ENCODE measurements at regions of chr4 and their contacts with region 1.

Region 1: GRCh38 chr4:154779362-154779947 is 1.6 kb upstream of the RBM46 start:
- DNase-seq: no peak
- ATAC-seq: no peak
- H3K4me3 ChIP-seq: no peak overlapping the region
- H3K27ac ChIP-seq: no peak overlapping the region
- H3K4me1 ChIP-seq: no peaks in the 10 kb centered on the region
- H3K27me3 ChIP-seq: no peaks in the 10 kb centered on the region
- CTCF ChIP-seq: peak; percentile 45; the same call in 1 of the 2 replicates

Region 2: DNA sequence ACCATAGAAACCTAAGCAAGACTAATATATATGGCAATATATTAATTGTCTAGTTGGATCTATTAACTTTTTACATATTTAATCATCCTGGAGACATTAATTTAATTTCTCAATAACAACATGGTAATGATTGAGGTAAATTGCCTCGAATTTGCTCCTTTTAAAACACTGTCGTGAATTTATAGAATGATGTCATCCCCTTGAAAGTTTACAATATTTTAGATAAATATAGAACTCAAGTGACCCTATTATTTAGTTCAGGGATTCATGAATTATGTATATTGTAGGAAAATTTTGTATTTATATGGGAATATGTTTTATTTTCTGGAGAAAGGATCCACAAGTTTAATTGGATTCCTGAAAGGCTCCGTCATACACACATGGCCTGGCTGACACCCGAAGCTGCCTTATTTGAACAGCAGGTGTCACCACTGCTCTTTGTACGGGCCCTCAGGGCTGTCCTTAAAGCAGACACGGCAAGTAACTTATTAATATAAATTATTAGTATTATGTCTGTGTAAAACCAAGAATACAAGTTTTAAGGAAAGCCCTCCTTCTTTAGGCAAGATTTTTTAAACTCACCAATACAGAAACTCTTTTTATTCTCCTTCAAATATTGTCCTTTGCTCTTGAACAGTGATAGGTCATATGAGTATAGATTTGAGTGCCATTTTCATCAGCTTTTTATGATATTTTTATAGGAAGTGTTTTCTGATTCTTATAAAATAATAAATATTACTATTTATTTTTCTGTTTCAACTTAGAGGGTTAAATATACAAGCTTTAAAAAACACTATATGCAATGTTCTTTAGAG is 227.4 kb before region 1 on chr4:
- CTCF ChIA-PET with region 1: no interaction called
- POLR2A ChIA-PET with region 1: no interaction called
- in situ Hi-C with region 1: no loop called
- intact Hi-C with region 1: loop called (anchors 5 kb)
- DNase-seq: peak; percentile 56
- ATAC-seq: peak; percentile 77
- H3K4me3 ChIP-seq: no peak overlapping the region
- H3K27ac ChIP-seq: no peak overlapping the region
- H3K4me1 ChIP-seq: peaks cover 8% of the 10 kb centered on the region
- H3K27me3 ChIP-seq: no peaks in the 10 kb centered on the region
- CTCF ChIP-seq: peak; percentile 81

Region 3: DNA sequence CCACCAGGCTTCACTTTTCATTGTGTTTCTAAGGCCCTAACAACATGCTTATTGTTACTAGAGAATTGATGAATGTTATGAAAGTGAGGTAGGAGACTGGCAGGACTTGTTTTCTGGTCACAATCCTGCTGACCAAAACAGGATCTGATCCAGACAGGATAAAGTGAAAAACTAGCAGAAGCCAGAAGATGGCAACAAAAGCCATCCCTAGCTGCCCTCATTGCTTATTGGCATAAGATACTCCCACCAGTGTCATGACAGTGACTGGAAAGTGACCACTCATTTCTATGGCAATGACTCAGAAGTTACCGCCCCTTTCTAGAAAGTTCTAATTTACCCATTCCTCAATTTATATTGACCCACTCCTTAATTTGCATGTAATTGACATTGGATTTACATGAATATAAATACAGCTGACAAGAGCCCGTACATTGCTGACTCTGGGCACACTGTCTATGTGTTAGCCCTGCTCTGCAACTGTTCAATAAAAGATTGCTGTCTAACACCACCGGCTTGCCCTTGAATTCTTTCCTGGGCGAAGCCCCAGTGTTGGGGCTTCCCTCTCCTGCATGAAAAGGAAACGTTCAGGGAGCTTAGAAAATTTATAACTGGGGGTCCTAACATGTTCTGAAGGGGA is 137.0 kb before region 1 on chr4:
- CTCF ChIA-PET with region 1: no interaction called
- POLR2A ChIA-PET with region 1: no interaction called
- in situ Hi-C with region 1: no loop called
- intact Hi-C with region 1: loop called (anchors 5 kb)
- DNase-seq: no peak
- ATAC-seq: no peak
- H3K4me3 ChIP-seq: no peak overlapping the region
- H3K27ac ChIP-seq: no peak overlapping the region
- H3K4me1 ChIP-seq: no peaks in the 10 kb centered on the region
- H3K27me3 ChIP-seq: no peaks in the 10 kb centered on the region
- CTCF ChIP-seq: no peak

Region 4: GRCh38 chr4:154686838-154687237 is 92.6 kb before region 1 on chr4:
- CTCF ChIA-PET with region 1: no interaction called
- POLR2A ChIA-PET with region 1: no interaction called
- in situ Hi-C with region 1: no loop called
- intact Hi-C with region 1: loop called (anchors 5 kb)
- DNase-seq: no peak
- ATAC-seq: no peak
- H3K4me3 ChIP-seq: no peak overlapping the region
- H3K27ac ChIP-seq: no peak overlapping the region
- H3K4me1 ChIP-seq: no peaks in the 10 kb centered on the region
- H3K27me3 ChIP-seq: no peaks in the 10 kb centered on the region
- CTCF ChIP-seq: no peak; the same call in 1 of the 2 replicates